Esophagus squamous epithelium (tissue), 5 donors: ENCODE measurements at regions of chr1 and their contacts with region 1.

Region 1: GRCh38 chr1:48102766-48103165 is 105.6 kb upstream of the TRABD2B start:
- DNase-seq: no peak
- H3K4me3 ChIP-seq: no peak overlapping the region
- H3K27ac ChIP-seq: no peak overlapping the region
- H3K4me1 ChIP-seq: peaks cover 0 to 9% (median 0%) of the 10 kb centered on the region in 3 donors
- H3K27me3 ChIP-seq: peaks cover 0 to 14% (median 0%) of the 10 kb centered on the region in 4 donors
- CTCF ChIP-seq: no peak
- POLR2A ChIP-seq: no peak

Region 2: GRCh38 chr1:47755101-47755990 is 347.4 kb before region 1 on chr1:
- intact Hi-C with region 1: no loop called
- DNase-seq: no peak
- H3K4me3 ChIP-seq: no peak overlapping the region
- H3K27ac ChIP-seq: no peak overlapping the region
- H3K4me1 ChIP-seq: peaks cover 10 to 41% (median 24%) of the 10 kb centered on the region in 3 donors
- H3K27me3 ChIP-seq: no peaks in the 10 kb centered on the region
- CTCF ChIP-seq: peak in 5 of 6 experiments; percentile 35 to 58 (median 36)
- POLR2A ChIP-seq: no peak

Region 3: DNA sequence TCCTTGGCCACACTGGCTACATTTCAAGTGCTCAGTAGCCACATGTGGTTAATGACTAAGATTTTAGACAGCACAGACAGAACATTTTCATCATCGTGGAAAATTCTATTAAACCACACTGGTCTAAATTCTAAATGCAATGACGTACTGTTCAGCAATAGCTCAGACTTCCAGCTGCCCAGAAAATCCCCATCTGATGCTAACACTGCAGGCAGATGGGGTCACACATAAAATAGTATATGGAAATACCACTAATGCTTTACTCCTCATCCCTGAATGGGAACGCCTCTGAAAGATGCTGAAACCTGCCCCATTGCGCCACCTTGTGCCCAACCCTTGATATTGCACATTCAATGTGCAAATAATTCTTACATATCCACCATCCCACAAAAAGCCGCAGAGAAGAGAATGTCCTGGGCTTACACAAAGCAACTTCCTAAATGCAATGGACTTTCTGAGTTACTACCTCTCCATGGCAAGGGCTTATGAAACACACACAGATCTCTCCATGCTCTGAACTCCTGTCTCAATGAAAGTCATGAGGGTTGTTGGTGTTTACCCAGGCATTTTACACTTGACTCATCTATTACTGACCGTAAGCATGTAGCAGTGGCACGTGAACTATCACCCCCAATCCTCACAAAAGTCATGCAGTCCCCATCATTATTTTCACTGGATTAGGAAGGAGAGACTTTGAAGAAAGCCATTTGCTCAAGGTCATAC is 99.4 kb after region 1 on chr1:
- intact Hi-C with region 1: loop called (anchors 5 kb)
- DNase-seq: no peak
- H3K4me3 ChIP-seq: no peak overlapping the region
- H3K27ac ChIP-seq: no peak overlapping the region
- H3K4me1 ChIP-seq: peaks cover 0 to 38% (median 0%) of the 10 kb centered on the region in 3 donors
- H3K27me3 ChIP-seq: no peaks in the 10 kb centered on the region
- CTCF ChIP-seq: peak; percentile 76 to 84 (median 80)
- POLR2A ChIP-seq: no peak